HepG2 (cell line): ENCODE measurements at regions of chrX and their contacts with region 1.

Region 1: GRCh38 chrX:41441934-41442823 is 5.0 kb upstream of the NYX start:
- DNase-seq: peak; percentile 84
- ATAC-seq: peak; percentile 90
- H3K4me3 ChIP-seq: peak overlapping the region; percentile 50 to 68 (median 56); a peak in 5 of 6 replicates
- H3K27ac ChIP-seq: peak overlapping the region; percentile 56
- H3K4me1 ChIP-seq: peaks cover 21% of the 10 kb centered on the region
- H3K27me3 ChIP-seq: no peaks in the 10 kb centered on the region
- CTCF ChIP-seq: peak; percentile 84
- EP300 ChIP-seq: peak in 1 of 2 experiments; percentile 47; a peak in 2 of 4 replicates
- POLR2A ChIP-seq: peak in 1 of 2 experiments; percentile 33; a peak in 2 of 4 replicates
- RAD21 ChIP-seq: peak; percentile 83

Region 2: DNA sequence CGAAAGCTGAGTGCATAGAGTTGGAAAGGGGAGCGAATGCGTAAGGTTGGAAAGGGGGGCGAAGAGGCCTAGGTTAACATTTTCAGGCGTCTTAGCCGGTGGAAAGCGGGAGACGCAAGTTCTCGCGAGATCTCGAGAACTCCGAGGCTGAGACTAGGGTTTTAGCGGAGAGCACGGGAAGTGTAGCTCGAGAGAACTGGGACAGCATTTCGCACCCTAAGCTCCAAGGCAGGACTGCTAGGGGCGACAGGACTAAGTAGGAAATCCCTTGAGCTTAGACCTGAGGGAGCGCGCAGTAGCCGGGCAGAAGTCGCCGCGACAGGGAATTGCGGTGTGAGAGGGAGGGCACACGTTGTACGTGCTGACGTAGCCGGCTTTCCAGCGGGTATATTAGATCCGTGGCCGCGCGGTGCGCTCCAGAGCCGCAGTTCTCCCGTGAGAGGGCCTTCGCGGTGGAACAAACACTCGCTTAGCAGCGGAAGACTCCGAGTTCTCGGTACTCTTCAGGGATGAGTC is 108.4 kb before region 1 on chrX and contains the start of gene DDX3X:
- CTCF ChIA-PET with region 1: no interaction called
- POLR2A ChIA-PET with region 1: interaction called, 9 read pairs
- in situ Hi-C with region 1: no loop called
- intact Hi-C with region 1: loop called (anchors 5 kb)
- DNase-seq: peak; percentile 75
- ATAC-seq: peak; percentile 66
- H3K4me3 ChIP-seq: peak within 1 kb of the TSS; percentile 72 to 88 (median 84)
- H3K27ac ChIP-seq: peak within 1 kb of the TSS; percentile 100
- H3K4me1 ChIP-seq: peaks cover 33% of the 10 kb centered on the region
- H3K27me3 ChIP-seq: no peaks in the 10 kb centered on the region; a peak in 1 of 5 replicates
- CTCF ChIP-seq: peak; percentile 29; the same call in 1 of the 2 replicates
- EP300 ChIP-seq: no peak
- POLR2A ChIP-seq: peak; percentile 99 to 100
- RAD21 ChIP-seq: no peak
- total RNA-seq, gene DDX3X: 239 and 370 TPM in 2 replicates

Region 3: DNA sequence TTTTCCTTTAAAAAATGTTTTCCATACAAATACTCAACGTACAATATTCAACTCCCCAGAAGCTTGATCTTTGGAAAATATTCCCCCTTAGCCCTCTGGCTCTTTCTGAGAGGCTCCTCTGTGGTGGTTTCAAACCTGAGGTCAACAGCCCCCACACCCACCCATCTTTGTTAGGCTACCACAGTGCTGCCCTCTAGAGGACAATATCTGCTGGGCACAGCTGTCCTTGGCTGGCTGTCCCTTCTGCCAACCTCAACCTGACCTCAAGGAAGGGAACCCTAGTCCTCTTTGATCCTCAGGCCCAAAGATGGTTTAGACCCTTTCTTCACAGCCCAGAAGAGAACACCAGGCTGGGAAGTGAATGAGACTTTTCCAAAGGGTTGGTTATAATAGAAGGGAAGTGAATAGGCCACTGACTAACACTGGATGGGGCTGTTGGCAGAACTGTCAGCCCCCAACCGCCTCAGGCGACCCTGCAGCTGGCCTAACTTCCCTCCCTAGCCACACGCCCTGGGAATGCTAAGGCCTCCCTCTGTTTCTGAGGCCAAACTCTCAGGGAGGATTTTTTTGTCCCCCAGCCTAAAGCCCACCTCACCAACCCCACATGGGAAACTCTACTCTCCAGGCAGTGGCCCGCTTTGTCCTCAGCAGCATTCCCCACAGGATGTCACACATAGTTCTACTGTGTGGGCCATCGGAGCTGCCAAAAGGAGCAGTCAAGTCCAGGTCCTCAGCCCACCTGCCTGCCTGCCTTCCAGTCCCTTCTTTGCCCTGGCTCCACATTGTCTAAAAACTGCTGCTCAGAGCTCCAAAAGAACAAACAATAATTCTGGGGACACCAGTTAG is 39.3 kb after region 1 on chrX:
- CTCF ChIA-PET with region 1: no interaction called
- POLR2A ChIA-PET with region 1: no interaction called
- in situ Hi-C with region 1: no loop called
- intact Hi-C with region 1: loop called (anchors 5 kb)
- DNase-seq: peak; percentile 29
- ATAC-seq: peak; percentile 88
- H3K4me3 ChIP-seq: no peak overlapping the region; a peak in 1 of 6 replicates
- H3K27ac ChIP-seq: no peak overlapping the region
- H3K4me1 ChIP-seq: peaks cover 37% of the 10 kb centered on the region
- H3K27me3 ChIP-seq: no peaks in the 10 kb centered on the region
- CTCF ChIP-seq: peak; percentile 68
- EP300 ChIP-seq: no peak
- POLR2A ChIP-seq: no peak
- RAD21 ChIP-seq: no peak

Region 4: GRCh38 chrX:41580423-41581064 is 138.4 kb after region 1 on chrX:
- CTCF ChIA-PET with region 1: no interaction called
- POLR2A ChIA-PET with region 1: no interaction called
- in situ Hi-C with region 1: no loop called
- intact Hi-C with region 1: no loop called
- DNase-seq: no peak
- ATAC-seq: no peak
- H3K4me3 ChIP-seq: no peak overlapping the region
- H3K27ac ChIP-seq: no peak overlapping the region
- H3K4me1 ChIP-seq: no peaks in the 10 kb centered on the region
- H3K27me3 ChIP-seq: no peaks in the 10 kb centered on the region
- CTCF ChIP-seq: no peak
- EP300 ChIP-seq: no peak
- POLR2A ChIP-seq: no peak
- RAD21 ChIP-seq: no peak

Region 5: DNA sequence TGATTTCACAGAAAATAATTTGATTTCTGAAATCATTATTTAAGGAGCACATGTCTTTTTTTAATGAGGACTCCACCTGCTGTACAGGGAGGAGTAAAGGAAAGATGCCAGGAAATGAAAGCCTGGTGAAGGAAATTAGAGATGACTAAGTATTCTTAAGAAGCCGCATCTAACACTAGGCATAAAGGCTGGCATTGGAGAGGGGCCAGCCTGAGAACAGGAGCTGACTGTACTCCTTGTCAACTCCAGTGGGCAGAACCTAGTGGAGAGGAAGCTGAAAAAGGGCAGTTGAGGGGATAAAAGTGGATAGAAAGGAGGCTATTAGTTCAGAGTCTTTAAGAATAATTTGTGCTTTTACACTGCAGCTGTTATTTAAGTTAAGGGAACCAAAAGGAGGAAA is 942.8 kb after region 1 on chrX:
- CTCF ChIA-PET with region 1: no interaction called
- POLR2A ChIA-PET with region 1: no interaction called
- in situ Hi-C with region 1: no loop called
- intact Hi-C with region 1: no loop called
- DNase-seq: no peak
- ATAC-seq: no peak
- H3K4me3 ChIP-seq: no peak overlapping the region
- H3K27ac ChIP-seq: no peak overlapping the region
- H3K4me1 ChIP-seq: no peaks in the 10 kb centered on the region
- H3K27me3 ChIP-seq: no peaks in the 10 kb centered on the region
- CTCF ChIP-seq: no peak
- EP300 ChIP-seq: no peak
- POLR2A ChIP-seq: no peak
- RAD21 ChIP-seq: no peak

Region 6: DNA sequence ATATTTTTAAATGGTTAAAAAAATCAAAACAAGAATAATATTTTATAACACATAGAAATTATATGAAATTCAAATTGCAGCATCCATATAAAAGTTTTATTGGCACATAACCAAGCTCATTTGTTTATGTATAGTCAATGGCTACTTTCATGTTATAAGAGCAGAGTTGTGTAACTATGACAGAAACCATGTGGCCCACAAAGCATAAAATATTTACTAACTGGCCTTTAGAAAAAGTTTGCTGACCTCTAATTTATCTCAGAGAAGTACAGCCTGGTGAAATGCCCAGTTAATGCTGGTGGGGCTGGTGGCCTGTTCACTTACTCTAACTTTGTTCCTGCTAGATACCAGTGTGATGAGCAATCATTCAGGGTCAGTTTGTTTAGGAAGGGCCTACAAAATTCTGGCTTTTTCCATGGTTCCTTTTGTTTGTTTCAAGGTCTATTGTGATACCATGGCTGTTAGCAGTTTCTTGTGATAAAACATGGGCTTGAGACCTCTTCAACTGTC is 1231.2 kb after region 1 on chrX:
- CTCF ChIA-PET with region 1: no interaction called
- POLR2A ChIA-PET with region 1: no interaction called
- in situ Hi-C with region 1: no loop called
- intact Hi-C with region 1: no loop called
- DNase-seq: no peak
- ATAC-seq: no peak
- H3K4me3 ChIP-seq: no peak overlapping the region
- H3K27ac ChIP-seq: no peak overlapping the region
- H3K4me1 ChIP-seq: no peaks in the 10 kb centered on the region
- H3K27me3 ChIP-seq: no peaks in the 10 kb centered on the region
- CTCF ChIP-seq: no peak
- EP300 ChIP-seq: no peak
- POLR2A ChIP-seq: no peak
- RAD21 ChIP-seq: no peak